Heart right ventricle (tissue), 16 donors: ENCODE measurements at regions of chr1 and their contacts with region 1.

Region 1: GRCh38 chr1:205528887-205529825 is 24.7 kb downstream of the CDK18 start:
- DNase-seq: peak; percentile 82 to 85
- ATAC-seq: peak; percentile 57 to 85 (median 79)
- H3K4me3 ChIP-seq: peak overlapping the region in 9 of 10 donors; percentile 9 to 50 (median 46)
- H3K27ac ChIP-seq: peak overlapping the region in 3 of 10 donors; percentile 11 to 47 (median 44)
- H3K4me1 ChIP-seq: peaks cover 11 to 41% (median 22%) of the 10 kb centered on the region in 9 donors
- H3K27me3 ChIP-seq: no peaks in the 10 kb centered on the region
- CTCF ChIP-seq: peak; percentile 89 to 99 (median 95)

Region 2: GRCh38 chr1:205568469-205569361 is 39.6 kb after region 1 on chr1:
- intact Hi-C with region 1: loop called in 4 of 10 experiments (anchors 5 kb)
- DNase-seq: no peak
- ATAC-seq: peak in 4 of 8 donors; percentile 27 to 63 (median 48)
- H3K4me3 ChIP-seq: peak overlapping the region in 9 of 10 donors; percentile 33 to 60 (median 49)
- H3K27ac ChIP-seq: peak overlapping the region in 1 of 10 donors; percentile 12
- H3K4me1 ChIP-seq: peaks cover 0 to 11% (median 3%) of the 10 kb centered on the region in 9 donors
- H3K27me3 ChIP-seq: peaks cover 0 to 73% (median 27%) of the 10 kb centered on the region in 7 donors
- CTCF ChIP-seq: peak in 5 of 9 donors; percentile 22 to 47 (median 33)

Region 3: GRCh38 chr1:205642679-205643307 is 113.6 kb after region 1 on chr1:
- intact Hi-C with region 1: loop called in 6 of 10 experiments (anchors 5 to 10 kb)
- DNase-seq: no peak
- ATAC-seq: no peak
- H3K4me3 ChIP-seq: no peak overlapping the region
- H3K27ac ChIP-seq: no peak overlapping the region
- H3K4me1 ChIP-seq: no peaks in the 10 kb centered on the region
- H3K27me3 ChIP-seq: no peaks in the 10 kb centered on the region
- CTCF ChIP-seq: no peak